Activated CD4-positive, alpha-beta memory T cell treated with anti-CD3 and anti-CD28 coated beads for 36 hours (primary cell): ENCODE measurements at regions of chr10 and their contacts with region 1.

Region 1: DNA sequence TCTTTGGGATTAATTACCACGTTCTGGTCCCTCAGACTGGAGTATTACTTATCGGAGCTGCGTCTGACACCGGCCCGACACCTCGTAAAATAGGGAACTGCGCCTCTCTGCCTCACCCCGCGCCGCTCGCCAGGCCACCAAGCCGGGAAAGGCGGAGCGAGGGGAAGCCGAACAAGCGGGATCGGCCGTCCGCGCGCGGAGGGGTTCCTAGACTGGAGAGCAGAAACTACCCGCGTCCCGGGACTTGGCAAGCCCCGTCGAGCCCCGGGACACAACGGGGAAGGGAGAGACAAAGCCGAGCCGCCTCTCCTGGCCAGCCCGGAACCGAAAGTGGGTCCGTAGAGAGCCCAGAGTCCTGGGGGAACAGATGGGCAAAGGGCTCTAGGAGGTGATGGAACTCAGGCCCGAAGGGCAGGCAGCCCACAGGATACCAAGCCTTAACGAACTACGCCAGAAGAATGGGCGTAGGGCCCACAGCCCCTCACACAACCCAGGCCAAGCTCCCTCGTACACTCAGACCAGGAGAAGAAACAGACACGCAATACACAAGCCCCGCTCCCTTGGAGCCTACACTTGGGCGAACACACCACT is 6.5 kb downstream of the LBX1 start:
- DNase-seq: peak; percentile 25
- H3K4me3 Mint-ChIP-seq: peak overlapping the region; percentile 31
- H3K27ac Mint-ChIP-seq: no peak overlapping the region
- H3K4me1 Mint-ChIP-seq: peaks cover 46% of the 10 kb centered on the region
- H3K27me3 Mint-ChIP-seq: peaks cover 84% of the 10 kb centered on the region

Region 2: DNA sequence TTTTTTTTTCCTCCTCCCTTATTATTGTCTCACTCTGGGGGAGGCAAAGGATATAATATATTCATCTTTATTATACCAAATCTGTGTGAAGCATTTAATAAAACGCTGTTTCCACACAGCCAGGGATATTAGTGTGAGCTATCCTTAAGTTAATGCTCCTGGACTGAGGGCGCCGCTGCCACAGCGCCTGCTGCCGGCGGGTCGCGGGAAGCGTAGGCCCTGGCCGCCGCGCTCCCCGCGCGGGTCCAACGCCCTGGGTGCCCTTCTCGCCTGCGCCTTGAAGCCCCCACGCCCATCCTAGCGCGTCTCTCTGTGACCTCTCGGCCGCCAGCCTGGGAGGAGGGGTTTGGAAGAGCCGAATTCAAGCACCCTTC is 15.9 kb after region 1 on chr10:
- CTCF ChIA-PET with region 1: interaction called, 93 read pairs
- POLR2A ChIA-PET with region 1: no interaction called
- intact Hi-C with region 1: loop called (anchors 2 kb)
- DNase-seq: peak; percentile 43
- H3K4me3 Mint-ChIP-seq: no peak overlapping the region
- H3K27ac Mint-ChIP-seq: no peak overlapping the region
- H3K4me1 Mint-ChIP-seq: peaks cover 14% of the 10 kb centered on the region
- H3K27me3 Mint-ChIP-seq: peaks cover 62% of the 10 kb centered on the region